ENCODE measurements at regions of chr18 and their contacts with region 1.

Region 1: DNA sequence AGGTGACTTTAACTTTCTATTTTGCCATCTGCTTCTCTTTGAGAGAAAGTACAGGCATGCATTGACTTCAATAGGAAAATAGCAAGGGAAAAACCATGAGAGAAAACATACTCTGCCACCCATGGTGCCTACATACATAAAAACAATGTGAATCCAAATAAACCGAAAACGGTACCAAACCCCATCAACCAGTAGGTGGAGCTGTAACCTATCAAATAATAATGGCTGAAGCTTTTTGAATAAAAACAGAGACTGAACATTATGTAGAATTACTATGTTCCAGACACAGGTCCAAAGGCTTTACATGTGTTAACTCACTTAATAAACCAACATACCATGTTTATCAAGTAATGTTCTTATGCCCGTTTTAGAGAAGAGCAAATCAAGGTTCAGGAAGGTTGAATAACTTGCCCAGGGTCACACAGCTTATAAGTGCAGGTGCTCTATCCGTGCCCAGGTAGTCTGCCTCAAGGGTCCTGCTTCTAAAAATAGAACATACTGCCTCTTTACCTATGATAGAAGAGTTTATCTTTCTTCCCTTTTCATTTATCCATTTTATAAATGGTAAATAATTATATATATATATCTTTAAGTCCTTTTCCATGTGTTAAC is 293.9 kb upstream of the SYT4 start:
- DNase-seq: peak; percentile 65
- H3K4me3 ChIP-seq: no peak overlapping the region
- H3K27ac ChIP-seq: no peak overlapping the region
- H3K4me1 ChIP-seq: no peaks in the 10 kb centered on the region
- H3K27me3 ChIP-seq: no peaks in the 10 kb centered on the region
- CTCF ChIP-seq: peak; percentile 52 to 59
- POLR2A ChIP-seq: no peak

Region 2: DNA sequence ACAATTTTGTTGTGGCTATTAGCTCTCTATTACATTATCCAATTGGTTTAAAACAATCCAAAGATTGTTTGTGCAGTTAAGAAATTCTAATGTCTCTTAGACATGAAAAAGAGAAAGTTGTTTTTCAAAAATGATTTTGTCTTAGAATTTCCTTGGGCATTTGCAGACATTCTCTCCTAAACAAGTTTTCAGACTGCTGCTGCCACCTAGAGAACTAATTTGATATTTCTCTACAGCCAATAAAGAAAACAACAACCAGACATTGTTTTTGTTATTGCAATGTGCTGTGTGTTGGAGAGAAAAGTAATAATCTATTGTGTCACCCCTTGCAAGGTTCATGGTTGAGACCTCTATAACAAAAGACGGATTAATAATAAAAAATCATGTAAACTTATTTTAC is 174.9 kb before region 1 on chr18:
- CTCF ChIA-PET with region 1: no interaction called
- POLR2A ChIA-PET with region 1: no interaction called
- dilution Hi-C with region 1: no loop called
- intact Hi-C with region 1: no loop called
- DNase-seq: peak; percentile 3
- H3K4me3 ChIP-seq: no peak overlapping the region
- H3K27ac ChIP-seq: no peak overlapping the region
- H3K4me1 ChIP-seq: no peaks in the 10 kb centered on the region
- H3K27me3 ChIP-seq: no peaks in the 10 kb centered on the region
- CTCF ChIP-seq: no peak
- POLR2A ChIP-seq: no peak

Region 3: DNA sequence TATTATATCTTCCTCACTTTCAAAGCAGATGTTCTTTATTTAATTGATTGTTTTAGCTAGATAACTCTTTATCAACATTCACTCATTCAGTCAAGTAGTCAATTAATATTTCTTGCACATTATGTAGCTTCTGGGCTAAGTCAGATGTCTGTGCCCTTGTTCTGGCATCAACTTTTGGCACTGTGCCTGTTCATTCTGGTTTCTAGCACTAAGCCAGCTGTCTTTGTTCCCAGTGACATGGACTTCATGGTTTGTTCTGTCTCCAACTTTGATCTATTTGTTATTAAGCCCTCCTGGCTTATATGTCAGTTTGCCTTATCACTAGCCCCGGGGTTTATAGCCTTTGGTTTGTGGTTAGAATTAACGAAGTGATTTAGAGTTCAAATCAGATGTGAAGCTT is 46.0 kb before region 1 on chr18:
- CTCF ChIA-PET with region 1: no interaction called
- POLR2A ChIA-PET with region 1: no interaction called
- dilution Hi-C with region 1: no loop called
- intact Hi-C with region 1: no loop called
- DNase-seq: no peak
- H3K4me3 ChIP-seq: no peak overlapping the region
- H3K27ac ChIP-seq: no peak overlapping the region
- H3K4me1 ChIP-seq: no peaks in the 10 kb centered on the region
- H3K27me3 ChIP-seq: no peaks in the 10 kb centered on the region
- CTCF ChIP-seq: no peak
- POLR2A ChIP-seq: no peak

Region 4: DNA sequence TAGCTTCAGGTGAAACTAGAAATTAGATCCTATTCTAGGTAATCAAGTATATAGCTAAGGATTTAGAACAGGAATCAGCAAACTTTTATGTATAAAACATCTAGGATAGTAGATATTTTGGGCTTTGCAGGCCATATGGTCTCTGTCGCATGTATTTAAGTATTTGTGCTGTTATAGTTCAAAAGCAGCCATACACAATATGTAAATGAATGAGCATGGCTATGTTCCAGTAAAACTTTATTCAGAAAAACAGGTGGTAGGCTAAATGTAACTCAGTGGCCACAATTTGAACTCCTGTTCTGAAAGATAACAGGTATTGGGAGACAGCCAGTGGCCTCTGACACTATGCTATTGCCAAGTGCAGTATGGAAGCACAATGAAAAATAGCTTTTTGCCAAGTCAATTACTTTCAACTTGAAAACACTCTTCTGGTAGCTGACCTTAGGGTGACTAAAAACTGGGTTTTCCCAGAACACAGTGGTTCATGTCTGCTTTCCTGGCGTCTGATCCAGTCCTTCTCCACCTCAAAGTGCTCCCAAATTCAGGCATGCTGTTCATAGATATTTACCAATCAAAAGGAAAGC is 10.8 kb after region 1 on chr18:
- CTCF ChIA-PET with region 1: interaction called, 188 read pairs
- POLR2A ChIA-PET with region 1: interaction called, 4 read pairs
- dilution Hi-C with region 1: no loop called
- intact Hi-C with region 1: loop called (anchors 1 kb)
- DNase-seq: peak; percentile 77
- H3K4me3 ChIP-seq: no peak overlapping the region
- H3K27ac ChIP-seq: no peak overlapping the region
- H3K4me1 ChIP-seq: no peaks in the 10 kb centered on the region
- H3K27me3 ChIP-seq: no peaks in the 10 kb centered on the region
- CTCF ChIP-seq: no peak
- POLR2A ChIP-seq: no peak

Region 5: DNA sequence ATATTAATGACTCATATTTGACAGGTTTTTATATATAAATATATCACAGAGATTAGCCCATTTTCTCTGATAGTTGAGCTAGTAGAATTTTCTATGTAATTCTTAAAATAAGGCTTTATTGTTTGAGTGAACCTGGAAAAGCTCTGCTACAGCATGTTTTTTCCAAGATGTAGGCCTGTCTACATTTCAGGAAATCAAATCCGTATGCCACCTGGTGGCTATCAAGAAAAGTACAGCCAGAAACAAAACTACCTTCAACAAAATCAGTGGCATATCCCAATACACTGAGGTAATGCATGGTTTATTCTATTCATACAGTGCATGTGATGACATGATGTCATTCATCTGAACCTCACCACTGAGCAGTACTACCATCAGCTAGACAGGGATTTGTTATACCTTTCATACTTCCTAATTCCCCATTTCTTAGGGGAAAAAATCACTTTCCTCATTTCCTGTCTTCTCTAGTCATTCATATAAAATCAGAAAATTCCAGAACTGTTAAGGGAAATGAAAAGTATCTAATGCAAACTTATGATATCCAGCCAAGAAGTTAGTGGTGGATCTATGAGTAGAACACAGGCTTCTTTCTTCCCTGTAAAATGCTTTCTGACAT is 16.5 kb after region 1 on chr18:
- CTCF ChIA-PET with region 1: interaction called, 188 read pairs
- POLR2A ChIA-PET with region 1: interaction called, 4 read pairs
- dilution Hi-C with region 1: no loop called
- intact Hi-C with region 1: loop called (anchors 1 kb)
- DNase-seq: peak; percentile 43
- H3K4me3 ChIP-seq: no peak overlapping the region
- H3K27ac ChIP-seq: no peak overlapping the region
- H3K4me1 ChIP-seq: no peaks in the 10 kb centered on the region
- H3K27me3 ChIP-seq: no peaks in the 10 kb centered on the region
- CTCF ChIP-seq: peak; percentile 44 to 56
- POLR2A ChIP-seq: no peak

Region 6: GRCh38 chr18:43596105-43596712 is 25.0 kb after region 1 on chr18:
- CTCF ChIA-PET with region 1: interaction called, 188 read pairs
- POLR2A ChIA-PET with region 1: no interaction called
- dilution Hi-C with region 1: no loop called
- intact Hi-C with region 1: no loop called
- DNase-seq: peak; percentile 33
- H3K4me3 ChIP-seq: no peak overlapping the region
- H3K27ac ChIP-seq: no peak overlapping the region
- H3K4me1 ChIP-seq: no peaks in the 10 kb centered on the region
- H3K27me3 ChIP-seq: no peaks in the 10 kb centered on the region
- CTCF ChIP-seq: peak; percentile 15 to 35
- POLR2A ChIP-seq: no peak